ENCODE measurements at regions of chr17 and their contacts with region 1.

Region 1: GRCh38 chr17:32936894-32937500 is 9.0 kb downstream of the TMEM98 start:
- DNase-seq: peak; percentile 67
- ATAC-seq: no peak
- H3K4me3 ChIP-seq: no peak overlapping the region
- H3K4me3 Mint-ChIP-seq: peak overlapping the region; percentile 39
- H3K27ac ChIP-seq: no peak overlapping the region
- H3K27ac Mint-ChIP-seq: no peak overlapping the region
- H3K4me1 ChIP-seq: peaks cover 3 to 7% of the 10 kb centered on the region in 2 donors
- H3K4me1 Mint-ChIP-seq: peaks cover 3% of the 10 kb centered on the region
- H3K27me3 ChIP-seq: peaks cover 0 to 33% (median 9%) of the 10 kb centered on the region in 4 experiments
- H3K27me3 Mint-ChIP-seq: peaks cover 38% of the 10 kb centered on the region
- CTCF ChIP-seq: peak; percentile 77

Region 2: GRCh38 chr17:32659419-32659842 is 277.6 kb before region 1 on chr17:
- CTCF ChIA-PET with region 1: no interaction called
- POLR2A ChIA-PET with region 1: no interaction called
- intact Hi-C with region 1: loop called (anchors 2 kb)
- DNase-seq: peak; percentile 65
- ATAC-seq: peak; percentile 71
- H3K4me3 ChIP-seq: no peak overlapping the region
- H3K4me3 Mint-ChIP-seq: no peak overlapping the region
- H3K27ac ChIP-seq: no peak overlapping the region
- H3K27ac Mint-ChIP-seq: no peak overlapping the region
- H3K4me1 ChIP-seq: no peaks in the 10 kb centered on the region
- H3K4me1 Mint-ChIP-seq: no peaks in the 10 kb centered on the region
- H3K27me3 ChIP-seq: no peaks in the 10 kb centered on the region
- H3K27me3 Mint-ChIP-seq: no peaks in the 10 kb centered on the region
- CTCF ChIP-seq: peak; percentile 98

Region 3: GRCh38 chr17:32777922-32778321 is 159.1 kb before region 1 on chr17:
- CTCF ChIA-PET with region 1: interaction called, 77 read pairs
- POLR2A ChIA-PET with region 1: no interaction called
- intact Hi-C with region 1: no loop called
- DNase-seq: no peak
- ATAC-seq: no peak
- H3K4me3 ChIP-seq: no peak overlapping the region
- H3K4me3 Mint-ChIP-seq: no peak overlapping the region
- H3K27ac ChIP-seq: no peak overlapping the region
- H3K27ac Mint-ChIP-seq: no peak overlapping the region
- H3K4me1 ChIP-seq: no peaks in the 10 kb centered on the region
- H3K4me1 Mint-ChIP-seq: no peaks in the 10 kb centered on the region
- H3K27me3 ChIP-seq: no peaks in the 10 kb centered on the region
- H3K27me3 Mint-ChIP-seq: no peaks in the 10 kb centered on the region
- CTCF ChIP-seq: no peak

Region 4: GRCh38 chr17:32915245-32915644 is 21.8 kb before region 1 on chr17:
- CTCF ChIA-PET with region 1: interaction called, 10 read pairs
- POLR2A ChIA-PET with region 1: no interaction called
- intact Hi-C with region 1: no loop called
- DNase-seq: no peak
- ATAC-seq: no peak
- H3K4me3 ChIP-seq: no peak overlapping the region
- H3K4me3 Mint-ChIP-seq: no peak overlapping the region
- H3K27ac ChIP-seq: no peak overlapping the region
- H3K27ac Mint-ChIP-seq: no peak overlapping the region
- H3K4me1 ChIP-seq: no peaks in the 10 kb centered on the region
- H3K4me1 Mint-ChIP-seq: no peaks in the 10 kb centered on the region
- H3K27me3 ChIP-seq: peaks cover 0 to 2% (median 0%) of the 10 kb centered on the region in 4 experiments
- H3K27me3 Mint-ChIP-seq: peaks cover 3% of the 10 kb centered on the region
- CTCF ChIP-seq: no peak

Region 5: GRCh38 chr17:32985050-32985756 is 48.2 kb after region 1 on chr17:
- CTCF ChIA-PET with region 1: no interaction called
- POLR2A ChIA-PET with region 1: no interaction called
- intact Hi-C with region 1: no loop called
- DNase-seq: no peak
- ATAC-seq: no peak
- H3K4me3 ChIP-seq: no peak overlapping the region
- H3K4me3 Mint-ChIP-seq: no peak overlapping the region
- H3K27ac ChIP-seq: no peak overlapping the region
- H3K27ac Mint-ChIP-seq: no peak overlapping the region
- H3K4me1 ChIP-seq: no peaks in the 10 kb centered on the region
- H3K4me1 Mint-ChIP-seq: peaks cover 3% of the 10 kb centered on the region
- H3K27me3 ChIP-seq: peaks cover 0 to 7% (median 0%) of the 10 kb centered on the region in 4 experiments
- H3K27me3 Mint-ChIP-seq: peaks cover 12% of the 10 kb centered on the region
- CTCF ChIP-seq: no peak

Measured in B cell (primary cell).